Activated naive CD4-positive, alpha-beta T cell treated with anti-CD3 and anti-CD28 coated beads for 36 hours (primary cell): ENCODE measurements at regions of chr5 and their contacts with region 1.

Region 1: DNA sequence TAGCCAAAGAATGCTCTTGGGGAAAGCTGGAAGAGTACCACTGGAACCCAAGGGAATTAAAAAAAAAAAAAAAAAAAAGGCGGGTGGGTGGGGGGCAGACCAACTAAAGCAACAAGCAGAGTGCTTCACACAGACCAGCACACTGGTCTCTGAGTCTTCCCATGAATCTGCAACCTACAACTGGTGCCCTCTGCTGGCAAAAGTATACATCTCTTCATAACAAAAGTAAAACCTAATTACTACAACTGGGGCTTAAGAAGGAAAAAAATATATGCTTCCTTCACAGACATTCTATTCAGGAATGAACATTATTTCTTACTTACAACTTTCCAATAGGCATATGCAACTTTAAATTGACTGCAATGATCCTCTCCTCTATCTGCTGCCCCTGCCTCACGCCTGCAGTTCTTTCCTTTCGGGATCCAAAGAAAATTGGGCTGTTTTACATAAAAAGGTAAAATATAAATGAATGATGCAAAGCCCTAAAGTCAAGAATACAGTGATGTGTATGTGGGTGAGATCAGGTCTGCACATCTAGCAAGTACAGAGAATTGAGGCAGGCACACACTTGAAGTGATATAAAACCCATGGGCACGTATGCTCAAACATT is 7.2 kb upstream of the KLHL3 start:
- DNase-seq: peak; percentile 78
- H3K4me3 Mint-ChIP-seq: no peak overlapping the region
- H3K27ac Mint-ChIP-seq: no peak overlapping the region
- H3K4me1 Mint-ChIP-seq: peaks cover 15% of the 10 kb centered on the region
- H3K27me3 Mint-ChIP-seq: no peaks in the 10 kb centered on the region

Region 2: DNA sequence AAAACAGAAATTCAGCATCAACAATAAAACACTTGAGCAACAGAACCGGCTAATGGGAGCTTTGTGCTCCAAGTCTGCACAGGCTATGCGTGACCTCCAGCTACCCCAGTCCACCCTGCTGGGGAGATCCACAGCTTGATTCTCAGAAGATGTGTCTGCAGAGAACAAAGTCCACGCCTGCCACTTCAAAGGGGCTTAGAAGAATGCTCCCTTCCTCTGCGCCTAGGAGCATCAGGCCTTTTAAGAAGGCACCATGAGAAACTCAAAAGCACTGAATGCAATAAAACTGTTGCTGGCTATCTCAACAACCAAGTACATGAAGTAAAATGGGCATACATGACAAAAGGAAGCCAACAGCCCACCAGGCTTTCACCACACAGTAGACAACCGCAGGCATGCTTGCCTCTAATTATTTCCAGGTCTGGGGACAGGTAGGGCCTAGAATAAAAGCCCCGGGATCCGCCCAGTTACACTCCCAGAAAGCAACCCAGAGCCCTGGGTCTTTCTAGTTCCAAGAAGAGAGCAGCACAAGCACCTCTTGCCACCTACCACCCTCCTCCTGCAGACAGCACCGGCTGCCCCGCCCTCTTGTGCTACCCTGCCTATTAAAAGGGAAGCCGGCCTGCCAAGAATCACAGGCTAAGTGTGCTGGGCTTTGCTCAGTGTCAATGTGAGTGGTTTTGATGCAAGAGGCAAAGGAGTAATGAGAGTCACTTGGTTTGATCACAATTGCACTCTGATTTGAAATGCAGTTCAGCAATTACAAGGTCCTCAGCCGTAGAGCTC is 367.2 kb before region 1 on chr5:
- CTCF ChIA-PET with region 1: no interaction called
- intact Hi-C with region 1: no loop called
- DNase-seq: no peak
- H3K4me3 Mint-ChIP-seq: no peak overlapping the region
- H3K27ac Mint-ChIP-seq: no peak overlapping the region
- H3K4me1 Mint-ChIP-seq: no peaks in the 10 kb centered on the region
- H3K27me3 Mint-ChIP-seq: peaks cover 2% of the 10 kb centered on the region

Region 3: DNA sequence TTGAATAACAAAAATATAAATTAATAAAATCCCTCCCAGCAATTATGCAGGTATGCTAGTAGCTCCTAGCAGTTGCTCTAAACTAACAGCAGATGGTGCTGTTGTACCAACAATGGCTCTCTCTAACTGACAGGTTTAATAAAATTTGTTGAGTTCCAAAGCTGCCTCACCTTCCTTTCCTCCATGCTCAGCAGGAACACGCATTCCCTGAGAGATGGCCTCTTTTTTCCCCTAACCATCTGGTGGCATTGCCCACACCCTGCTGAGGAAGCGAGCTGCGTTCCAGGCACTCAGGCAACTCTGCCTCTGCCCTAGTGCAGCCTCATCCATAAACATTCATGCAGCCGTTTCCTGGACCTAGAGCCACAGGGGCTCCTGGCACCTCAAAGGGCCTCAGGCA is 113.5 kb before region 1 on chr5:
- CTCF ChIA-PET with region 1: interaction called, 104 read pairs
- intact Hi-C with region 1: loop called (anchors 1 kb)
- DNase-seq: peak; percentile 35
- H3K4me3 Mint-ChIP-seq: no peak overlapping the region
- H3K27ac Mint-ChIP-seq: no peak overlapping the region
- H3K4me1 Mint-ChIP-seq: no peaks in the 10 kb centered on the region
- H3K27me3 Mint-ChIP-seq: no peaks in the 10 kb centered on the region

Region 4: GRCh38 chr5:137665678-137666460 is 77.3 kb before region 1 on chr5:
- CTCF ChIA-PET with region 1: interaction called, 508 read pairs
- intact Hi-C with region 1: no loop called
- DNase-seq: peak; percentile 67
- H3K4me3 Mint-ChIP-seq: no peak overlapping the region
- H3K27ac Mint-ChIP-seq: peak overlapping the region; percentile 25
- H3K4me1 Mint-ChIP-seq: peaks cover 24% of the 10 kb centered on the region
- H3K27me3 Mint-ChIP-seq: no peaks in the 10 kb centered on the region

Region 5: GRCh38 chr5:137695651-137696428 is 47.3 kb before region 1 on chr5:
- CTCF ChIA-PET with region 1: interaction called, 28 read pairs
- intact Hi-C with region 1: no loop called
- DNase-seq: peak; percentile 32
- H3K4me3 Mint-ChIP-seq: peak overlapping the region; percentile 38
- H3K27ac Mint-ChIP-seq: peak overlapping the region; percentile 73
- H3K4me1 Mint-ChIP-seq: peaks cover 48% of the 10 kb centered on the region
- H3K27me3 Mint-ChIP-seq: no peaks in the 10 kb centered on the region

Region 6: GRCh38 chr5:137728048-137728447 is 15.1 kb before region 1 on chr5:
- CTCF ChIA-PET with region 1: interaction called, 31 read pairs
- intact Hi-C with region 1: no loop called
- DNase-seq: no peak
- H3K4me3 Mint-ChIP-seq: no peak overlapping the region
- H3K27ac Mint-ChIP-seq: no peak overlapping the region
- H3K4me1 Mint-ChIP-seq: peaks cover 30% of the 10 kb centered on the region
- H3K27me3 Mint-ChIP-seq: no peaks in the 10 kb centered on the region